ENCODE measurements at regions of chr11 and their contacts with region 1.

Region 1: DNA sequence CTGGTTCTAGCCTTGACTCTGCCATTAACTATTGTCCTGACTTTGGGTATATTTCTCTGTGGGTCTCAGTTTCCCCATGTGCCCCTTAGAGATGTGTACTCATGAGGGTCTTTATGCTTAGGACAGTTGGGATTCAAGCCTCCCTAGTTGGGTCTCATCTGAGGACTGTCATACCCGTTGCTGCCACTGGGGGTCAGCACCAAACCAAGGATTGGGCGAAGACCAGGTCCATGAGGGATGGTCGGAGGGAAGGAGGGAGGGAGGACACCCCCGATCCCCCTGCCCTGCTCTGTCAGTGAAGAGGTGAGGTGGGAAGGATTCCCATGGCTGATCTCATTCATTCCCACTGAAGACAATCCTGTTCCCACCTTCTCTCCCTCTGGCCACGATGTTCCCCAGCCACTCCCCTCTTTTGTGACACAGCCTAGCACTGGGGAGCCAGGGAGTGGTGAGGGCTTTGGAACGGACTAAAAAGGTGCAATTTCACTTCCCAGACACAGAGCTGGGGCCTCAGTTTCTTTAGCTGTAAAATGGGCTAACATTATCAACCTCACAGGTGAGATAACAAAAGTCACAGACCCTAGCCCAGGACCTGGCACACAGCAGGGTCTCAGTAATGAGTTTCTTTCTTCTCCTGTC is 12.4 kb upstream of the KLHL35 start:
- DNase-seq: peak in 4 of 5 donors; percentile 58 to 71 (median 63)
- ATAC-seq: peak in 3 of 4 donors; percentile 64 to 74 (median 73)
- H3K4me3 ChIP-seq: no peak overlapping the region
- H3K27ac ChIP-seq: no peak overlapping the region
- H3K4me1 ChIP-seq: peaks cover 0 to 7% (median 0%) of the 10 kb centered on the region in 12 donors
- H3K27me3 ChIP-seq: no peaks in the 10 kb centered on the region
- CTCF ChIP-seq: peak; percentile 92 to 98 (median 94)
- POLR2A ChIP-seq: no peak

Region 2: DNA sequence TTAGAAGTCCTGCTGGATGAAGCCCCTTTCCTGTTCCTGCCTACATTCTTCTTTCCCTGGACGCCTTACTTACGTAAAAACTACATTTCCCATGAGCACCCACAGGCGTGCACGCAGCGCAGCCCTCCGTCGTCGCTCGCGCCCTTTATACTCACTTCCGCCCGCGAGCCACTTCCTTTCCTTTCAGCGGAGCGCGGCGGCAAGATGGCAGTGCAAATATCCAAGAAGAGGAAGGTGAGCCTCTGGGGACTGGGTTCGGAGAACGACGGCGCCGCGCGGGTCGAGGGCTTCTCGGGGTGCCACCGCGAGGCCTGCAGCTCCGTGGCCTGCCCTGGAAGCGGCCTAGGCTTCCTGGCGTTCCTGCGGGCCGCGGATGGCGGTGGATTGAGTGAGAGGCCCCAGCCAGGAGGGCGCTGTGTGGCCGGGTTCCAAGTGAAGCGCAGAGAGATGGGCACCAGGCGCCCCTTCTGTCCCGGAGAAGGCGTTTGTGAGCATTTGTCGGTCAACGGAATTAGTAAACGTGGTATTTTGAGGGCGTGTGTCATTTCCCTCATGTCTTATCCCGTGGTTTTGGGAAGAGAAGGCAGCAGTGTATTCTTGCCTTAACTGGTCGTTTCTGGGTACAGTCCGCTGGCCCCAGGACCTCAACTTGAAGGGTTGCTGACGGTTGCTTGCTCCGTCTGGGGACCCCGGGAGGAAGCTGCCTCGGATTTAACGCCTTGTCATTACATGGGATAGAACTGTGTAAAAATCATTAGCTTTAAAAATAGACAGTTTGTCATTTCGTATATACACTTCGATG is 45.9 kb before region 1 on chr11 and contains the start of gene RPS3:
- intact Hi-C with region 1: loop called in 3 of 10 experiments (anchors 10 kb)
- DNase-seq: peak; percentile 92 to 95 (median 94)
- ATAC-seq: peak; percentile 91 to 98 (median 97)
- H3K4me3 ChIP-seq: peak within 1 kb of the TSS; percentile 55 to 96 (median 76)
- H3K27ac ChIP-seq: peak within 1 kb of the TSS; percentile 81 to 95 (median 88)
- H3K4me1 ChIP-seq: peaks cover 0 to 35% (median 26%) of the 10 kb centered on the region in 12 donors
- H3K27me3 ChIP-seq: no peaks in the 10 kb centered on the region
- CTCF ChIP-seq: peak in 3 of 12 donors; percentile 30 to 44 (median 35)
- POLR2A ChIP-seq: peak in 1 of 2 donors; percentile 92
- total RNA-seq, gene RPS3: 434 to 1,232 (median 990) TPM

Region 3: DNA sequence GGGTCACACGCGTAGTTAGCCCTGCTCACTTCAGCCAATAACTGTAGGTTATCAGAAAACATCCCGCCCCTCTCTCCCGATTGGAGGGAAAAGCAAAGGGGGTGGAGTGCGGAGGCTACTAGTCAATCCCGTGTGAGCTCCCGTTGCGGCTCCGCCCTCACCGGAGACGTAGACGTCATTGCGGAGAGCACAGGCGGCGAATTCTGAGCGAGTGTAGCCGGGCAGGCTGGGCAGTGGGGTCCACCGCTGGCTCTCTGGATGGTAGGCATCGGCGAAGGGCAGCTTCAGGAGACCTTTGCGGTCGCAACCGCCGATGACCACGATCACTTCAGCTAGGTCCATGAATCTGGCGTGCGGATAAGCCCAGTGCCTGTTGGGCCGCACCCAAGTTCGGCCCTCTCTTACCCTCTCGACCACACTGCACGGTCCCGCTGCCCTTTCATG is 17.1 kb before region 1 on chr11:
- intact Hi-C with region 1: no loop called
- DNase-seq: peak; percentile 89 to 95 (median 93)
- ATAC-seq: peak; percentile 81 to 95 (median 91)
- H3K4me3 ChIP-seq: peak overlapping the region in 11 of 12 donors; percentile 16 to 66 (median 51)
- H3K27ac ChIP-seq: peak overlapping the region in 3 of 12 donors; percentile 27 to 30 (median 28)
- H3K4me1 ChIP-seq: peaks cover 0 to 39% (median 16%) of the 10 kb centered on the region in 12 donors
- H3K27me3 ChIP-seq: peaks cover 0 to 39% (median 14%) of the 10 kb centered on the region in 9 donors
- CTCF ChIP-seq: no peak
- POLR2A ChIP-seq: peak in 1 of 2 donors; percentile 57

Region 4: DNA sequence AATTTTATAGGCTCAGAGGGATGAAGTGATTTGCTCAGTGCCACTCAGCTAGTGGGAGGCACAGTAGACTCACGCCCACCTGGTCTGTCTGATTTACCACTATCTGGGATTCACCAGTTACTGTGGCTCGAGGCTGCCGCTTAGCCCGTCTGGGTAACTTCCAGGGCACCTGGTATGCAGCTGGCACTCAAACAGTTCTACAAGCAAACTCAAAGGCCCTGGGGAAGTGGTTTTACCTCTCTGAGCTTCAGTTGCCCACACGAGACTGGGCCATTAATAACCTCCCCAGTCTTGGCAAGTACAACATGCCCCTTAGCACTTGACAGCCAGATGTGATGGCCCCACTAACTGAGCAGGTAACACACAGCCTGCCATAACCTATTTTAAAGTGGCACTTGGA is 77.8 kb after region 1 on chr11:
- intact Hi-C with region 1: no loop called
- DNase-seq: no peak
- ATAC-seq: no peak
- H3K4me3 ChIP-seq: no peak overlapping the region
- H3K27ac ChIP-seq: no peak overlapping the region
- H3K4me1 ChIP-seq: peaks cover 0 to 33% (median 16%) of the 10 kb centered on the region in 12 donors
- H3K27me3 ChIP-seq: no peaks in the 10 kb centered on the region
- CTCF ChIP-seq: no peak
- POLR2A ChIP-seq: no peak